Left ventricle myocardium superior (tissue), 1 donor: ENCODE measurements at regions of chr1 and their contacts with region 1.

Region 1: DNA sequence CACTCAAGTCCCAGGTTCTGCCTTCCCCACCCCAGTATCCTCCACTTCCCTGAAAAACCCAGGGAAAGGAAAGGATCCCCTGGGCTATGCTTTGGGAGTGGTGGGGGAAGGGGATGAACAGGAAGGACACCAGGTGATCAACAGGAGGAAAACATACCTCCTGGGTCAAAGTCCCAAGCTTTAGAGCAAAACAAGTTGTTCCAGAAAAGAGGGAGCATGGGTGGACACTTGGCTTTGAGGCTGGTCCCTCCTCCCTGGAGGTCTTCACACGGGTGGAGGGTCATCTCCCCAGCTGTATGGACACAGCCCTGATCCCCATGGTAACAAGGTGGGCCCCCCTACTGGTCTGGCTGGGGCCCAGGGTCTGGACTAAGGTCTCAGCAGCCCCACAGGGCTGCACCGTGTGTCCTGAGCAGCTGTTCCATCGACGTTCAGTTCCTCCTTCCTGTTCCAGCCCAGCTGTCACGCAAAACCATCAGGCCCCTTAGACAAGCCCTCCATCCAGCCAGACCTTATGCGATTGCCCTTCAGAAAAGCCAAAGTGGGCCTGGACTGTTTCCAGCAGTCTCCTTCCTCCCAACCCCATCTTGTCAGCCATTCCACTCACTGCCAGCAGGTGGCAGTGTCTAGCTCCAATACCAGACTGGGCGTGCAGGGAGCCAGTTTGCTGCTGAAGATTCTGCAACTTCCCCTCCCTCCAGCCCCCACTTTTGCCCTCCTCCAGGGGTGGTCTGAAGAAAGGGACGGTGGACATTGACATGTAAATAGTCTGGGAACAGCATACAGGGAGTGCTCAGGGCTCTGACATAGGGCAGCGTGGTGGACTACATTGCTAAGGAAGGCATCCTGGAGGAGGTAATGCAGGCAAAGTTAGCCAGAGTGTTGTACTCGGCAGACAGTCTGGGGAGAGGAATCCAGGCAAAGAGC is 2.9 kb upstream of the PDZK1IP1 start:
- DNase-seq: peak; percentile 85
- ATAC-seq: peak; percentile 47

Region 2: GRCh38 chr1:47262787-47263413 is 70.2 kb after region 1 on chr1:
- intact Hi-C with region 1: loop called (anchors 10 kb)
- DNase-seq: no peak
- ATAC-seq: no peak

Region 3: DNA sequence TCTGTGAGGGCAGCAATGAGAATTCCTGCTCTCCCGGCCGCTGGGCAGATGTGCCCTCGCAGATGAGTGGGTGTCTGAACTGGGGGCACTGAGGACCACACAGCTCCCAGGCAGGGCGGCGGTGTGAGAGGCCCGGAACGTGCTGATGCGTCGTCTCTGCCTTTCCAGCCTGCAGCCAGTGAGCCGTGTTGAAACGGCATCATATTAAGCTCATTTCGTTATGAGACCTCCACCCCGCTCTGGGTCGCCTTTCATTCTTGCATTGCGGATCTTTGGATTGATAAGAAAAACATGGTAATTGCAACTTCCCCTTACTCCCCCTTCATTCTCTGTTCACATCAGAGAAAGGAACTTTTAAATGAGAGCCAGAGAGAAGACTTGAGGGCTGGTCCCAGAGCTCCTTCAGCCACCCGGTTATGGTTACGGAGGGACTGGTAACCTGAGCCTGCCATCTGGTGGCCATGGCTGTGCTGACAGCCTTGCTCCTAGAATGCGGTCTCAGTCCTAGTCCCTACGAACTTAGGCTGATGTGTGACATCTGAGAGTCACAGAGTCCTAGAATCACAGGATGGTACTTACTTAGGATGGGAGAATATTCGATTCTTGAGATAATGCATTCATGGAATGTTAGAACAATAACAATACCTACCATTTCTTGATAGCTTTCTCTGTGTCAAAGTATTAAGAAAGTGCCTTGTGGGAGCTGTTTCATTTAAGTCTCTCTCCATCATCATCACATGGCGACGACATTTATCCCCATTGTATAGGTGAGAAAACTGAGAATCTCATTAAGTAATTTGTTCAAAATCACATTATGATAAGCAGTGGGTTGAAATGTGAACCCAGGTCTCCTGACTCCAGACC is 533.5 kb after region 1 on chr1:
- intact Hi-C with region 1: loop called (anchors 10 kb)
- DNase-seq: peak; percentile 80
- ATAC-seq: peak; percentile 95